ENCODE measurements at regions of chr5 and their contacts with region 1.

Region 1: DNA sequence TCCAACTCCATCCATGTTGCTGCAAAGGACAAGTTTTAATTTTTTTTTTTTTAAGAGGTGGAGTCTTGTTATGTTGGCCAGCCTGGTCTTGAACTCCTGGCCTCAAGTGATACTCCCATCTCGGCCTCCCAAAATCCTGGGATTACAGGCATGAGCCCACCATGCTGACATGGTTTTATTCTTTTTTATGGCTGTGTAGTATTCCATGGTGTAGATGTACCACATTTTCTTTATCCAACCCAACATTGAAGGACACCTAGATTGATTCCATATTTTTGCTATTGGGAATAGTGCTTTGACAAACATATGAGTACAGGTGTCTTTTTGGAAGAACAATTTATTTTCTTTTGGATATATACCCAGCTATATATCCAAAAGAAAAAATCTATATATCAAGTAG is 6.1 kb upstream of the POC5 start:
- DNase-seq: no peak
- CTCF ChIP-seq: no peak

Region 2: DNA sequence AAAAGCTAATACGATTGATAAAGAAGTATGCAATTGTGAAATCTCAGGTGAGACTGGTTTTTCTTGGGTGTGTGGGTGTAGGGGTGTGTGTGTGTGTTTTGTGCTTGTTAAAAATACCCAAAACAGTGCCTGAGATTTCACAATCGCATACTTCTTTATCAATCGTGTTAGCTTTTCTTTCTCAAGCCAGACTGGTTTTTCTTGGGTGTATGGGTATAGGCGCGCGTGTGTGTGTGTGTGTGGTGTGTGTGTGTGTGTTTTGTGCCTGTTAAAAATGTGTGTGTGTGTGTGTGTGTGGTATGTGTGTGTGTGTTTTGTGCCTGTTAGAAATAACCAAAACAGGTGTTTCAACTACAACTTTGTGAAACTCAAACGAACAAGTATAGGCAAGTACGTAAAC is 265.7 kb before region 1 on chr5:
- CTCF ChIA-PET with region 1: no interaction called
- POLR2A ChIA-PET with region 1: no interaction called
- DNase-seq: no peak
- CTCF ChIP-seq: no peak

Region 3: DNA sequence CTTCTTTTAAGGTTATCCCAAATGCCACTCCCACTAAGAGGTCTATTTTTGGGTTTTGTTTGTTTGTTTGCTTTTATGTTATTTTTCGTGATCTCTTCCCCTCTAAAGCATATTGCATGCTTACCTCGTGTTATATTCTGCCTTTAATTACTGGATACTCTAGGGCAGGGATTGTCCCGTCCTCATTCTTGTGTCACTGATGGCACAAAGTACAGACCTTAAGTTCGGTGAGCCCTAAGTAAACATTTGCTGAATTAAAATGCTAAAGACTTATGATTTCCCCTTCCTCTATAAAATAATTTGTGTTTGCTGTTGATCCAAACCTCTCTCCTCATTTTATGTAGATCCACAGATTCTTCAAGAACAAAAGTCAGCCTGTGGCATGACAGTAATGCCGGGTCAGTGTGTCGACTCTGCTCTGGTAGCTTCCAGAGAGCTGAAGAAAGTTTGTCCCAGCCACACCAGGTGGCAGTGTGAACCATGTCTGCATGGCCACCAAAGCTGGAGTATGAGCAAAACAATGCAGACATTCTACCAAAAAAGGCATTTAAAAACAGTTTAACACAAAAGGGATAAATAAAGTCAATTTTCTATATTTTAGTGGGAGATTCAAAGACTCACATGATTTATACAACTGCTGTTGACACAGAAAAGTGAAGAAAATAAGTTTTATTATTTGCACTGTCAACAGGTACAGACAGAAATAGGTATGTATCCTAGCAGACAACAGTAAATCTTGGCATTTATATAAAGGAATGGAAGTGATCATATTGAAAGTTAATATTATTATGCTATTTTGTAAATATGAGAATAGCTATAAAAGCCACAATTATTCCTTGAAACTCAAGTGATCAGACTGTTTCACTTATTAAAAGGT is 11.8 kb after region 1 on chr5:
- CTCF ChIA-PET with region 1: interaction called, 10 read pairs
- POLR2A ChIA-PET with region 1: no interaction called
- DNase-seq: peak; percentile 36
- CTCF ChIP-seq: peak; percentile 63